Ascending aorta (tissue), 2 donors: ENCODE measurements at regions of chr15 and their contacts with region 1.

Region 1: GRCh38 chr15:43510200-43511011 is 7.0 kb upstream of the MAP1A start:
- DNase-seq: peak; percentile 95 to 99
- H3K4me3 ChIP-seq: peak overlapping the region; percentile 49 to 63
- H3K27ac ChIP-seq: peak overlapping the region; percentile 51 to 59
- H3K4me1 ChIP-seq: peaks cover 0 to 14% of the 10 kb centered on the region in 2 donors
- H3K27me3 ChIP-seq: no peaks in the 10 kb centered on the region
- CTCF ChIP-seq: peak in 2 of 3 experiments; percentile 9 to 30

Region 2: GRCh38 chr15:41972253-41973242 is 1537.9 kb before region 1 on chr15 and contains the start of gene EHD4:
- intact Hi-C with region 1: loop called (anchors 10 kb)
- DNase-seq: peak; percentile 98 to 100
- H3K4me3 ChIP-seq: peak within 1 kb of the TSS; percentile 96 to 99
- H3K27ac ChIP-seq: peak within 1 kb of the TSS; percentile 98
- H3K4me1 ChIP-seq: peaks cover 0 to 24% of the 10 kb centered on the region in 2 donors
- H3K27me3 ChIP-seq: no peaks in the 10 kb centered on the region
- CTCF ChIP-seq: peak; percentile 42 to 56 (median 44)
- total RNA-seq, gene EHD4: 70.4 TPM

Region 3: GRCh38 chr15:43440721-43441281 is 69.6 kb before region 1 on chr15:
- intact Hi-C with region 1: loop called (anchors 2 kb)
- DNase-seq: peak; percentile 11 to 76
- H3K4me3 ChIP-seq: no peak overlapping the region
- H3K27ac ChIP-seq: peak overlapping the region; percentile 68 to 70
- H3K4me1 ChIP-seq: peaks cover 0 to 9% of the 10 kb centered on the region in 2 donors
- H3K27me3 ChIP-seq: no peaks in the 10 kb centered on the region
- CTCF ChIP-seq: peak; percentile 40 to 65 (median 58)

Region 4: GRCh38 chr15:43492673-43493601 is 17.5 kb before region 1 on chr15 and contains the start of gene TP53BP1:
- intact Hi-C with region 1: loop called (anchors 1 kb)
- DNase-seq: peak; percentile 93 to 99
- H3K4me3 ChIP-seq: peak within 1 kb of the TSS; percentile 76 to 92
- H3K27ac ChIP-seq: peak within 1 kb of the TSS; percentile 73 to 85
- H3K4me1 ChIP-seq: peaks cover 0 to 17% of the 10 kb centered on the region in 2 donors
- H3K27me3 ChIP-seq: no peaks in the 10 kb centered on the region
- CTCF ChIP-seq: no peak
- total RNA-seq, gene TP53BP1: 34.6 TPM

Region 5: GRCh38 chr15:44711356-44712107 is 1201.1 kb after region 1 on chr15 and contains the start of gene B2M:
- intact Hi-C with region 1: loop called (anchors 10 kb)
- DNase-seq: peak; percentile 90 to 98
- H3K4me3 ChIP-seq: peak within 1 kb of the TSS; percentile 87 to 90
- H3K27ac ChIP-seq: peak within 1 kb of the TSS; percentile 97 to 99
- H3K4me1 ChIP-seq: peaks cover 4 to 15% of the 10 kb centered on the region in 2 donors
- H3K27me3 ChIP-seq: no peaks in the 10 kb centered on the region
- CTCF ChIP-seq: no peak
- total RNA-seq, gene B2M: 3,395 TPM